ENCODE measurements at regions of chr11 and their contacts with region 1.

Region 1: DNA sequence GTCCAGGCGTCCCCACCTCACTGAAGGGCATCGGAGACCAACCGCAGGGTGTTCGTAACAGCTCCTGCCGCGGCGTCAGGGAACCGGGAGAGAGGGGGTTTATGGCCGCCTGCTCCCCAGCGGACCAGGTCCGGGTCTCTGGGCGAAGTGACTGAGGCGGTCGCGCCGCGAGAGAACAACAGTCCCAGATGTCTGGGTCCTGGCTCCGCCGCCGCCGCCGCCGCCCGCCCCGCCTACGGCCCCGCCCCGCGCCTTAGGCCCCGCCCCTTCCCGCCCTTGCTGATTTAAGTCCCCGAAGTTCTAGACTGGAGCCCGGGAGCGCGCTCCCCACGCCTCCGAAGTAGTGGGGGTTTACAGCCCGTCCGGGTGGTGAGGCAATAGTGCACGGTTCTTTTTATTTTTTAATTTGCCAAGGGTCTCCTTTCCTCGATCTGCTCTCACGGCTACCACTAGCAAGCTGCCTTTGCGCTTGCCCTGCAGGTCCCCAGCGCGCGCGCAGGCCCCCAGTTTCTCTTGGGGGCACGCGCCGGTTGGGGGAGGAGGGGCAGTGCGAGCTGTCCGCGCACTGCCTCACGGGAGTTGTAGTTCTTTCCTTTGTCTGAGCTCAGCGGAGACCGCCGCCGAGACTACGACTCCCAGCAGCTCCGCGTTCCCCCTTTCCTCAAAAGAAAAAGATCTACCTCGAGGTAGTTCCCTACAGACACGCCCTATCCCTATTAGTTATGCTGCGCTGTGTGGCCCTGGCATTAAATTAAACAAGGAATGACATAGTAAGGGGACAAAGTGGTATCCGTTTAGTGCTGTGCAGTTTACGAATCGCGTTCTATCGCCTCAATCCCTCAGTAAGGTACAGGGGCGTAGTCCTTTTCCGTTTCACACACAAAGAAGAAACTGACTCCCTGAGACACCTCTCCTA is at the start of gene PGM2L1:
- DNase-seq: peak; percentile 89

Region 2: GRCh38 chr11:74412321-74412720 is 13.8 kb after region 1 on chr11:
- CTCF ChIA-PET with region 1: no interaction called
- POLR2A ChIA-PET with region 1: interaction called, 28 read pairs
- DNase-seq: no peak

Region 3: GRCh38 chr11:74443071-74443864 is 44.8 kb after region 1 on chr11:
- CTCF ChIA-PET with region 1: interaction called, 3 read pairs
- POLR2A ChIA-PET with region 1: interaction called, 17 read pairs
- DNase-seq: peak; percentile 35

Region 4: DNA sequence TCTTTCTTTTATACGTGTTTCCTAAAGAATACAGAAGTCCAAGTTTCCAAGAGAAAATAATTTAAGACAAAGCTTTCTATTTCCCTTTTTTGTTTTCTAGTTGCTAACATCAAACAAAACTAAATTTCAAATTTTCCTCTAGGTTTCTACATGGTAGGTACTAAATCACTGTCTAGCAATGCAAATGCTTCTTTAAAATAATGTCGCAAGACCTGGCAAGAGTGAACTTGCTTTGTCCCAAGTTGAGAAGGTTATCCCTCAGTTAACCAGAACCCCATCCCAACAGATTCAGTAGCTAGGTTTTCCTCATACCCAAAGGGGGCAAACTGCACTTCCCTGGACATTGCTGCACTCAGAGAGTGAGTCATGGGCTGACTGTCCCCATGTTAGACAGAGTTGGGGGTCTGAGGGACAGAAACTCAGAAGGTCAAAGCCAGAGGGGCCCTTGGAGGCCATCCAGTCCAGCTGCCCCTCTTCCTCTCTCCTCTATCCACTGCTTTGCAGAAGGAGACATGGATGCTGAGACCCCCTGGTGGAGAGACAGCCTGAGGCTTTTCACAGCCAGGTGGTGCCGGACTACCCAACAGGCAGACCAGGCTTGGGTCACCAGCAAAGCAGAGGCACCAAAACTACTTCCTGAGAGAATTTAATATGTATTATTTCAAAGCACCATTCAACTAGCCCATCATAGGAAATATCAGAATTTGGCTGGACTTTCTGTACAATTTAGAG is 675.1 kb after region 1 on chr11:
- CTCF ChIA-PET with region 1: no interaction called
- POLR2A ChIA-PET with region 1: no interaction called
- DNase-seq: peak; percentile 22